ENCODE measurements at regions of chr5 and their contacts with region 1.

Region 1: GRCh38 chr5:134527146-134527960 is 1.9 kb downstream of the JADE2 start:
- DNase-seq: peak; percentile 76 to 86
- H3K4me3 ChIP-seq: peak overlapping the region; percentile 89
- H3K27ac ChIP-seq: peak overlapping the region; percentile 52; the same call in 1 of the 2 replicates
- H3K4me1 ChIP-seq: peaks cover 20% of the 10 kb centered on the region
- H3K27me3 ChIP-seq: no peaks in the 10 kb centered on the region
- CTCF ChIP-seq: peak; percentile 89

Region 2: GRCh38 chr5:134225618-134226440 is 301.5 kb before region 1 on chr5 and contains the start of gene PPP2CA:
- CTCF ChIA-PET with region 1: no interaction called
- POLR2A ChIA-PET with region 1: interaction called, 19 read pairs
- intact Hi-C with region 1: no loop called
- DNase-seq: peak; percentile 92 to 100
- H3K4me3 ChIP-seq: peak within 1 kb of the TSS; percentile 79
- H3K27ac ChIP-seq: peak within 1 kb of the TSS; percentile 95
- H3K4me1 ChIP-seq: peaks cover 36% of the 10 kb centered on the region
- H3K27me3 ChIP-seq: no peaks in the 10 kb centered on the region
- CTCF ChIP-seq: peak; percentile 38; the same call in 1 of the 2 replicates
- total RNA-seq, gene PPP2CA: 146 and 149 TPM in 2 replicates

Region 3: DNA sequence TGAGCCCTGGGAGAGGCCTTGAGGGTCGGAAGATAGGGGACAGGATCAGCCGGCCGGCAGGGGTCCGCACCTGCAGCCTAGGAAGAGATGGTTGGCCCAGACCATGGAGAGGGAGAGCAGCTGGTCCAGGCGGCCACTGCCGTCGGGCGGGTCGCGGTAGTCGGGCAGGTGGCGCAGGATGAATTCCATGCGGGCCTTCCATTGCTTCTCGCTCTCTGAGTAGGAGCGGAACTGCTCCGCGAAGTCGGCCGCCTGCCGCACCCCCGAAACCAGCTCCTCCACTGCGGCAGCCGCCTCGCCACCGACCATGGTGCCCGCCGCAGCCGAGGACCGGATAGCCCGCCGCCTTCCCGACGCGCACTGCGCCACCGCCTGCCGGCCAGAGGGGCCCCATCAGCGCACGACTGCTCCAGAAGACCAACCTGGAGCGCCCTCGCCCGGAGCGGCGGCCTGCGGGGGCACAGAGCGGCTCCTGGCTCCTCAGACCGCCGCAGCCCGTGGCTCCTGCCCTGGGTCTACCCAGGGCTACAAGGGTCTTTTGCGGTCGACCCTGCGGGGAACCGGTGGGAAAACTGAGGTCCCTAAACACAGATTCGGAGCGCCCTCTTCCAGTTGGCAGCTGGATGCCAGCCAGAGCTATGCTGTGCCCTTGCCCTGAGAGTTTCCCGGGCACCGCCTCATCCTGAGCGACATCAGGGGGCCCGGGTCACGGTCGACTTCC is 115.6 kb before region 1 on chr5 and contains the start of gene CDKN2AIPNL:
- CTCF ChIA-PET with region 1: interaction called, 3 read pairs
- POLR2A ChIA-PET with region 1: interaction called, 4 read pairs
- intact Hi-C with region 1: loop called (anchors 1 kb)
- DNase-seq: peak; percentile 65 to 89
- H3K4me3 ChIP-seq: peak within 1 kb of the TSS; percentile 98
- H3K27ac ChIP-seq: no peak within 1 kb of the TSS
- H3K4me1 ChIP-seq: peaks cover 16% of the 10 kb centered on the region
- H3K27me3 ChIP-seq: no peaks in the 10 kb centered on the region
- CTCF ChIP-seq: peak; percentile 60
- total RNA-seq, gene CDKN2AIPNL: 35.3 and 36.1 TPM in 2 replicates

Region 4: DNA sequence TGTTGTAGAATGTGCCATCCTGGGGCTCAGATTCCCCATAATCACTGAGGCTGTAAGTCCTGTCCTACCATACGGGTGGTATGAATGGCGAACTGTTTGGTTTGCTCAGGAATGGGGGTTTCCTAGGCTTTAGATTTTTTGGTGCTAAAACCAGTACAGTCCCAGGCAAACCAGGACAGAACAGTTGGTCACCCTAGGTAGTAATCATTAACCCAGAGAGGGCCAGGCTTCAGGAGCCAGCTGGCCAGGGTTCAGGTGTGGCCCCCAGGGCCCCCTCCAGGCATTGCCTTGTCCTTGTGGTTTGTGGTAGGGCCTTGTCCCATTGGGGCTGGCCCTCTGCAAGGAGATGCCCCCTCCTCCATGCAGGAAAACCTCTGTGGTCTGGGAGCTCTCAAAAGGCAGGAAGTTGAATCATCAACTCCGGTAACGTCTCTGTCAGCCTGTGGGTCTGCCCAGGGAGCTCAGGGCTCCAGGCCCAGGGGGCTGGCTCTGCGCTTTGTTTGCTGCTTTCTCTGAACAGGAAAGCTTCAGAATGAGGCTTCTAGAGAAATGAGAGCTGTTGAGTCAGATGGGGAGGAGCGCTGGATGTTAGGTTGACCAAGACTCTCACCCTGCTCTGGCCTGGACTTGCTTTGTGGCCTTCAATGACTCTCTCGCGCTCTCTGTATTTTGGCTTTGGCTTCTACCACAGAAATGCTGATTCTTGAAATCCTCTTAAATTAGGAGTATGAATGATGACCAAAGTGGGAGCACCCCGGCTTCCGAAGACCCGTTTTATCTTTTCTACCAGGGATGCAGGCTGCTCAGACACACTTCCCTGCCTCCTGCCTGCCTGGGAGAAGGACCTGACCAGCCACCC is 24.0 kb before region 1 on chr5:
- CTCF ChIA-PET with region 1: interaction called, 6 read pairs
- POLR2A ChIA-PET with region 1: no interaction called
- intact Hi-C with region 1: loop called (anchors 1 kb)
- DNase-seq: peak; percentile 85 to 91
- H3K4me3 ChIP-seq: no peak overlapping the region
- H3K27ac ChIP-seq: peak overlapping the region; percentile 86
- H3K4me1 ChIP-seq: peaks cover 69% of the 10 kb centered on the region
- H3K27me3 ChIP-seq: no peaks in the 10 kb centered on the region
- CTCF ChIP-seq: no peak

Region 5: GRCh38 chr5:134555890-134556311 is 28.5 kb after region 1 on chr5:
- CTCF ChIA-PET with region 1: interaction called, 6 read pairs
- POLR2A ChIA-PET with region 1: interaction called, 8 read pairs
- intact Hi-C with region 1: loop called (anchors 1 kb)
- DNase-seq: peak; percentile 61 to 86
- H3K4me3 ChIP-seq: no peak overlapping the region
- H3K27ac ChIP-seq: no peak overlapping the region
- H3K4me1 ChIP-seq: 0 out of 2 replicates have a peak, but pooled peaks cover 5% of the 10 kb centered on the region
- H3K27me3 ChIP-seq: no peaks in the 10 kb centered on the region
- CTCF ChIP-seq: no peak

Region 6: GRCh38 chr5:134784241-134784920 is 257.0 kb after region 1 on chr5:
- CTCF ChIA-PET with region 1: no interaction called
- POLR2A ChIA-PET with region 1: no interaction called
- intact Hi-C with region 1: no loop called
- DNase-seq: no peak
- H3K4me3 ChIP-seq: no peak overlapping the region
- H3K27ac ChIP-seq: no peak overlapping the region
- H3K4me1 ChIP-seq: no peaks in the 10 kb centered on the region
- H3K27me3 ChIP-seq: no peaks in the 10 kb centered on the region
- CTCF ChIP-seq: 0 out of 2 replicates have a peak, but pooled peaks have one; percentile 24

Region 7: DNA sequence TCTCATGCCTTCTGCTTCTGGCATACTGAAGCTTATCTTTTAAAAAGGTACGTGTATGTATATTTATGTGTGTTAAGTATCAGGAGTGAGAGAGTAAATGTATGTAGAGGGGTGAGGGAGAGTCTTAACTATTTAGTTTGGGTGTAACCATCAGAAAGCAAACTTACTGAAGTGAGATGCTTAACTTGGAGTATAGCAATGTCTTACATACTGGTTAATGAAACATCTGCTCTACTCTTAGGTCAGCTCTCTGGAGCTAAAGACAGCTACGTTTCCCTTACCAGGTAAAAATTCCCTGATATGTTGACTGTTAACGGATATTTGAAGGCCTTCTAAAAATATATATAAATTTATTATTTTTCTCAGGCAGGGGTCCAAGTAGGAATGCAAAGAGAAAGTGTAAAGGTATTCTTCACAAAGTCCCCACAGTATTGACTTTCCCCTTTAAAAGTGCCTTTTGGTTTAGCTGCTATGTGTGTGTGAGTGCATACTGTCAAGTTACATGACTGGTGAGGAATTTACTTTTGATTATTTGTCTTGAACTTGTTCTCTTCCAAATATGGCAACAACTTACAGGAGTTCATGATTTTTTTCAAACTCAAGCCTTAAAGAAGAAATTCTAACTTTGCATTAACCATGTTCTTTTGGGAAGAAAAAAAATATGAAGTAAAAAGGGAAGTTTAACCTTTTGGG is 306.1 kb after region 1 on chr5:
- CTCF ChIA-PET with region 1: no interaction called
- POLR2A ChIA-PET with region 1: interaction called, 13 read pairs
- intact Hi-C with region 1: no loop called
- DNase-seq: no peak
- H3K4me3 ChIP-seq: no peak overlapping the region
- H3K27ac ChIP-seq: no peak overlapping the region
- H3K4me1 ChIP-seq: no peaks in the 10 kb centered on the region
- H3K27me3 ChIP-seq: no peaks in the 10 kb centered on the region
- CTCF ChIP-seq: no peak

Measured in PC-9 (cell line).